ENCODE measurements at regions of chr20 and their contacts with region 1.

Region 1: GRCh38 chr20:51480507-51481270 is 61.8 kb downstream of the NFATC2 start:
- DNase-seq: peak; percentile 91
- H3K4me3 Mint-ChIP-seq: peak overlapping the region; percentile 58
- H3K27ac Mint-ChIP-seq: peak overlapping the region; percentile 97
- H3K4me1 Mint-ChIP-seq: peaks cover 84% of the 10 kb centered on the region
- H3K27me3 Mint-ChIP-seq: no peaks in the 10 kb centered on the region

Region 2: DNA sequence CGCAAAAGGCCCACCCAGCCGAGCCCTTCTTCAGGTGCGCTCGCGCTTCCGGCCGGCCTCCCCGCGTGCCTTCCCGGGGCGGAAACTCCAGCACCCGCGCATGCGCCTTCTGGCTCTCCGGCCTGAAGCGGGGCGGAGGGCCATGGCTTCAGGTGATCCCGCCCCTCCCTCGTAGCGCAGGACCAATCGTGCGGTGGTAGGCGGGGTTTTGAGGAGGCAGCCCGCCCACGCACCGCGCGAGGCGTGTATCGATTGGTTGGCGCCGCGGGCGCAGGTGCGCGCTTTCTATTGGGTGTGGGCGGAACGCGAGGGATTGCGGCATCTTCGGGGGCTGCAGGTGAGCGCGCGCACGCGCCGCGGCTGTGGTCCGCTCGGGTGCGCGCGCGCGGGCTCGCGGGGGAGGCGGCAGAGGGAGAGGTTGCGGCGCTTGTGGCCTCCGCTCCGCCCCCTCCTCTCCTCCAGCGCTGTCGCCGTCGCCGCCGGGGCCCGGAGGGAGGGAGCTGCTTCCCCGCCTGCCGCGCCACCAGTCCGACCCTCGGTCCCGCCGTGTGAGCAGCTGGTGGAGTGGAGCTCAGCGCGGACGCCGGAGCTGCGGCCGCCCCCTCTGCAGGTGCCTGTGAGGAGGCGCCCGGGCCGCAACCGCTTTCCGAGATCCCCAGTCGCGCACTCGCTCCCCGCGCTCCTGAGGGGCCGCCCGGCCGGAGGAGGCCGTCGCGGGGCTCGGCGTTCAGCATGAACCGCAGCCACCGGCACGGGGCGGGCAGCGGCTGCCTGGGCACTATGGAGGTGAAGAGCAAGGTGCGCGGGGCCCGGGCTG is 749.4 kb before region 1 on chr20 and contains the start of gene PARD6B:
- CTCF ChIA-PET with region 1: no interaction called
- intact Hi-C with region 1: loop called (anchors 5 kb)
- DNase-seq: peak; percentile 100
- H3K4me3 Mint-ChIP-seq: peak within 1 kb of the TSS; percentile 86
- H3K27ac Mint-ChIP-seq: peak within 1 kb of the TSS; percentile 70
- H3K4me1 Mint-ChIP-seq: peaks cover 45% of the 10 kb centered on the region
- H3K27me3 Mint-ChIP-seq: no peaks in the 10 kb centered on the region
- total RNA-seq, gene PARD6B: 3.3 to 3.9 TPM

Region 3: GRCh38 chr20:51195419-51195901 is 285.2 kb before region 1 on chr20:
- CTCF ChIA-PET with region 1: no interaction called
- intact Hi-C with region 1: no loop called
- DNase-seq: no peak
- H3K4me3 Mint-ChIP-seq: no peak overlapping the region
- H3K27ac Mint-ChIP-seq: no peak overlapping the region
- H3K4me1 Mint-ChIP-seq: no peaks in the 10 kb centered on the region
- H3K27me3 Mint-ChIP-seq: peaks cover 2% of the 10 kb centered on the region

Region 4: DNA sequence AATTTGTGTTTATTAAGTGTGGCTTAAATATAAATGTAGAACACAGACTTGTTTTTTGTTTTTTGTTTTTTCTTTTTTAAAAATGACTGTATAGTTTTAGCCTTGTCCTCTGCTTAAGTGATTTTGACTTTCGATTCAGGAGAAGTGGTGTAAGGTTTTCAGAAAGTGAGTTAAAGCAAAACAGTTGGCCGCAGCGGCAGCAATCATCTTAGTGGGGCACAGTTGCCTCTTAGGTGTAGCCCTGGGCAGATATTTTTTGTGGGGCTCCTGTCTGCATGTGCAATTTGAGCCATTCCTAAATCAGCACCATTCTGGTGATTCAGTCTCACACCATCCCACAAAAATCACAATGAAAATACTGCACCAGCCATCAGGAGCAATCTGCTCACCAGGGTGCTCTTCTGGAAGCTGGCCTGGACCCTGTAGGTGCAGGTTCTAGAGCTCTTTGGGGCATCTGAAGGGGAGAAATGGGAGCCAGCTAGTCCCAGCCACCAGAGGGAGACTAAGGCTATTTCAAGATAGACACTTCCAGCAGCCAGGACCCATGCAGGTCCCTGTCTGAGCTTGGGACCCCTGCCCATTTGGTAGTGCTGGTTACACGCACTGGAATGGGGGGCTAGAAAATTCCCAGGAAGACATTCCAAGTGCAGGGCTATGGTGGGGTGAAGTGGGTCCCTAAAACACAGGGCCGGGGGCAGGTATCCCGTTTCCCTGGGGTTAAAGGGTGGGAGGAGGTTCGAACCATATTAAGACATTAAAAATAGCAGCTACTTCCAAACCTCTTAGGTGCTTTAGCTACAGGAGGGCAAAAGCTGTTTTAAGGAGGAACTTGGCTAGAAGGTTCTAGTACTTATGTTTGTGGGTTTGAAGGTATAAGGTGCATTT is 94.8 kb before region 1 on chr20:
- CTCF ChIA-PET with region 1: interaction called, 4 read pairs
- intact Hi-C with region 1: loop called (anchors 1 kb)
- DNase-seq: peak; percentile 61
- H3K4me3 Mint-ChIP-seq: no peak overlapping the region
- H3K27ac Mint-ChIP-seq: no peak overlapping the region
- H3K4me1 Mint-ChIP-seq: peaks cover 48% of the 10 kb centered on the region
- H3K27me3 Mint-ChIP-seq: no peaks in the 10 kb centered on the region

Region 5: GRCh38 chr20:51423290-51423667 is 57.4 kb before region 1 on chr20:
- CTCF ChIA-PET with region 1: interaction called, 4 read pairs
- intact Hi-C with region 1: loop called (anchors 1 kb)
- DNase-seq: peak; percentile 44
- H3K4me3 Mint-ChIP-seq: no peak overlapping the region
- H3K27ac Mint-ChIP-seq: no peak overlapping the region
- H3K4me1 Mint-ChIP-seq: peaks cover 42% of the 10 kb centered on the region
- H3K27me3 Mint-ChIP-seq: no peaks in the 10 kb centered on the region

Region 6: DNA sequence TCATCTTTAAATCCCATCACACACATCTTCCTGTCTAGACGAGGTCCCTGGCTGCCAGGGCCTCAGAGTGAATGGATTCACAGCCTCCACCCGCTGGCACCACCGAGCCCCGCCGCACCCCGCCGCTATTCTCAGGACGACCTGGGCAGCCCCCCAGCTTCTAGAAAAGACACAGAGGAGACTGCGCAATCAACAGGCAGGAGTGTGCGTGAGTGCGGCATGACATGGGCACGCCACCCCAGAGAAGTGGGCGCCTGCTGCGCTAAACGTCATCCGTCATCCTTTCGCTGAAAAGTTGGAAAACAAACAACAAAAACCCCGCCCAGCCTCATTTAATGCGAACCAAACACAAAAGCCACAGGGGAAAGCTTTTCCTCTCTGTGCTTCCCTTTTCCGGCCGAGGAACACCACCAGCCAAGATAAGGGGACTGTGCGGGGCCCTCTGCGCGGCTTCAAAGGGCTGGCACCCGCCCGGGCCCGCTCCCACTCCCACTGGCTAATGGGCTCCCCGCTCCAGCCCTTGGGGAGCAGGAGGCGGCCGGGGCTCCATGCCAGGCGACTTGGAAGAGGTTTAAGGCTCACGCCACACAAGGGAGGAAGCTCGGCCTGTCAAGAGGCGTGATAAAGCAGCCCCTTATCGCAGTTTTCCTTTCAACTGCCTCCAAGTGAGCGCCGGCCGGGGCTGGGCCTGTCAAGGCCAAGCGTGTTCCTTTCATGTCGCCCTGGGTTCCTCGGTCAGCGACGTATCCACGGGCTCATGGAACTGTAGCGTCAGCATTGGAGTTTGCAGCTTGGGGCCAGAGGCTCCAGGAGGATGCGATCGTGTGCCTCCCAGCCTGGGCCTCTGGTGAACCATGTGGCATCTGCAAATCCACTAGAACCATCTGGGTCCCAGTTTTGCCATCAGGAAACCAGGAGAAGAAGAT is 11.7 kb after region 1 on chr20:
- CTCF ChIA-PET with region 1: interaction called, 9 read pairs
- intact Hi-C with region 1: loop called (anchors 1 kb)
- DNase-seq: no peak
- H3K4me3 Mint-ChIP-seq: no peak overlapping the region
- H3K27ac Mint-ChIP-seq: peak overlapping the region; percentile 93
- H3K4me1 Mint-ChIP-seq: peaks cover 97% of the 10 kb centered on the region
- H3K27me3 Mint-ChIP-seq: no peaks in the 10 kb centered on the region

Region 7: GRCh38 chr20:51512645-51513044 is 32.0 kb after region 1 on chr20:
- CTCF ChIA-PET with region 1: interaction called, 3 read pairs
- intact Hi-C with region 1: loop called (anchors 1 kb)
- DNase-seq: peak; percentile 45
- H3K4me3 Mint-ChIP-seq: no peak overlapping the region
- H3K27ac Mint-ChIP-seq: peak overlapping the region; percentile 74
- H3K4me1 Mint-ChIP-seq: peaks cover 75% of the 10 kb centered on the region
- H3K27me3 Mint-ChIP-seq: no peaks in the 10 kb centered on the region

Measured in activated naive CD4-positive, alpha-beta T cell treated with anti-CD3 and anti-CD28 coated beads for 36 hours (primary cell).